PC-3 (cell line): ENCODE measurements at regions of chr5 and their contacts with region 1.

Region 1: GRCh38 chr5:126354012-126354857 is 69.0 kb upstream of the GRAMD2B start:
- DNase-seq: peak; percentile 93
- ATAC-seq: peak; percentile 70
- H3K4me3 ChIP-seq: peak overlapping the region; percentile 61
- H3K27ac ChIP-seq: peak overlapping the region; percentile 97
- H3K4me1 ChIP-seq: peaks cover 72% of the 10 kb centered on the region
- H3K27me3 ChIP-seq: no peaks in the 10 kb centered on the region
- CTCF ChIP-seq: peak; percentile 78

Region 2: DNA sequence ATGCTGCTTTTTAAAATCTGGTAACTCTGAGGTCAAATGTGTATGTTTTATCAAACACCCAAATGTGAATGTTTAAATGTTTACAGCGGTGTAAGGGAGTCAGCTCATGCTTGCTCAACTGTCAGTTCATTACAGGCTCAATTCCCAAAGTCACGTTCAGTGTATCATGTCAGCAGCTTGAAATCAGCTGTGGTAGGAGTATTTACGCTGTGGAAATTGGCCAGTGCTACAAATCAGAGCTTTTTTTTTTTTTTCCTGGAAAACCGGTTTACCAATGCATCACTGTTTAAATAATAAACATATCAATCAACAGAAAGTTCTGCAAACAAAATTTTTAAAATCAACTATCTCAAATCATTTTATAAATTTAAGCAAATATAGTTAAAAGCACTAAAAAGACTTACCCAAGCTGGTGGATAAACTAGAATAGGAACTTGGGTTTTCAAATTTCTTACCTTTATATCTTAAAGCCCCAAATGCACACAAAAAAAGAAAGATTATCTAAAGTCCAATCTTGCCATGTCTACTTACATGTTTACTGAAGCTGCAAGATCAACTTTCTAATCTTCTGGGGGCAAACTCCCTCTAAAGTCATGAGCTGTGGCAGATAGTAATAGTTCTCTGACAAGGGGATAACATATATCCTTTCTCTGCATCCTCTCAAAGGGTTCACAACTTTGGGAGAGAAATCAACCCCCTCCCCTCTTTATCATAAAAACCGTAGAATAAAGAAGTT is 11.4 kb after region 1 on chr5:
- CTCF ChIA-PET with region 1: interaction called, 3 read pairs
- POLR2A ChIA-PET with region 1: interaction called, 11 read pairs
- intact Hi-C with region 1: no loop called
- DNase-seq: peak; percentile 84
- ATAC-seq: peak; percentile 52
- H3K4me3 ChIP-seq: peak overlapping the region; percentile 20; the same call in 1 of the 2 replicates
- H3K27ac ChIP-seq: peak overlapping the region; percentile 79
- H3K4me1 ChIP-seq: peaks cover 50% of the 10 kb centered on the region
- H3K27me3 ChIP-seq: no peaks in the 10 kb centered on the region
- CTCF ChIP-seq: no peak

Region 3: GRCh38 chr5:126384985-126385384 is 30.8 kb after region 1 on chr5:
- CTCF ChIA-PET with region 1: no interaction called
- POLR2A ChIA-PET with region 1: no interaction called
- intact Hi-C with region 1: loop called (anchors 1 kb)
- DNase-seq: peak; percentile 85
- ATAC-seq: peak; percentile 76
- H3K4me3 ChIP-seq: peak overlapping the region; percentile 41
- H3K27ac ChIP-seq: peak overlapping the region; percentile 80
- H3K4me1 ChIP-seq: peaks cover 44% of the 10 kb centered on the region
- H3K27me3 ChIP-seq: no peaks in the 10 kb centered on the region
- CTCF ChIP-seq: no peak

Region 4: GRCh38 chr5:126449751-126450271 is 95.6 kb after region 1 on chr5:
- CTCF ChIA-PET with region 1: no interaction called
- POLR2A ChIA-PET with region 1: interaction called, 21 read pairs
- intact Hi-C with region 1: loop called (anchors 5 kb)
- DNase-seq: peak; percentile 70
- ATAC-seq: peak; percentile 60
- H3K4me3 ChIP-seq: no peak overlapping the region
- H3K27ac ChIP-seq: peak overlapping the region; percentile 84
- H3K4me1 ChIP-seq: peaks cover 44% of the 10 kb centered on the region
- H3K27me3 ChIP-seq: no peaks in the 10 kb centered on the region
- CTCF ChIP-seq: no peak

Region 5: GRCh38 chr5:126544087-126544740 is 190.0 kb after region 1 on chr5:
- CTCF ChIA-PET with region 1: interaction called, 7 read pairs
- POLR2A ChIA-PET with region 1: interaction called, 3 read pairs
- intact Hi-C with region 1: loop called (anchors 1 kb)
- DNase-seq: peak; percentile 44
- ATAC-seq: peak; percentile 58
- H3K4me3 ChIP-seq: no peak overlapping the region
- H3K27ac ChIP-seq: no peak overlapping the region
- H3K4me1 ChIP-seq: no peaks in the 10 kb centered on the region
- H3K27me3 ChIP-seq: no peaks in the 10 kb centered on the region
- CTCF ChIP-seq: peak; percentile 62